ENCODE measurements at regions of chr20 and their contacts with region 1.

Region 1: DNA sequence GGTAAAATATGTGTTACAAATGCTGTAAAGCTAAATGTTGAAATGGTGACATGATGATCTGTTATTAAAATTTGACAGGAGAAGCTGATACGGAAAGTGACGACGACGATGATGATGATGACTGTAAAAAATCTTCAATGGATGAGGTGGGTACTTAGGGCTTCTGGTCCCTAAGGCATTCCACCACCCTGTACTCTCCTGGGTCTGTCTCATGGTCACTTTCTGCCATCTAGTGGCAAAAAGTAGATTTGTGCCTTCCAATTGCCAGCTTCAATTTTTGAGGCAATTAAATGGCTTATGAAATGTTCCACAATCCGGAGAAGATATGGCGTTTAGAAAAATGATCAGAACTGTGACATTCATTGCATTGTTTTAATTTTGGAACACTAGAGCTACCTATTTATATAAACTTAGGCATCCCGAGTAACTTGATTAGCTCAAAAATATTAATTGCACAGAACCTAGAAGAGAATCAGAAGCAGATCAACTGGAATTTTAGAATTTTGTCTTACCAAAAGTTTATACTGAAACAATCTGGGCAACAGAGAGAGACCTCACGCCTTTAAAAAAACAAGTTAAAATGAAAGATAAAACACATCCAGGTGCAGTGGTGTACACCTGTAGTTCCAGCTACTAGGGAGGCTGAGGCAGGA is 346.5 kb upstream of the PLCB4 start:
- DNase-seq: peak; percentile 56
- H3K4me3 ChIP-seq: no peak overlapping the region
- H3K27ac ChIP-seq: no peak overlapping the region
- H3K4me1 ChIP-seq: no peaks in the 10 kb centered on the region
- H3K27me3 ChIP-seq: no peaks in the 10 kb centered on the region
- CTCF ChIP-seq: peak; percentile 66 to 74 (median 67)
- POLR2A ChIP-seq: no peak

Region 2: DNA sequence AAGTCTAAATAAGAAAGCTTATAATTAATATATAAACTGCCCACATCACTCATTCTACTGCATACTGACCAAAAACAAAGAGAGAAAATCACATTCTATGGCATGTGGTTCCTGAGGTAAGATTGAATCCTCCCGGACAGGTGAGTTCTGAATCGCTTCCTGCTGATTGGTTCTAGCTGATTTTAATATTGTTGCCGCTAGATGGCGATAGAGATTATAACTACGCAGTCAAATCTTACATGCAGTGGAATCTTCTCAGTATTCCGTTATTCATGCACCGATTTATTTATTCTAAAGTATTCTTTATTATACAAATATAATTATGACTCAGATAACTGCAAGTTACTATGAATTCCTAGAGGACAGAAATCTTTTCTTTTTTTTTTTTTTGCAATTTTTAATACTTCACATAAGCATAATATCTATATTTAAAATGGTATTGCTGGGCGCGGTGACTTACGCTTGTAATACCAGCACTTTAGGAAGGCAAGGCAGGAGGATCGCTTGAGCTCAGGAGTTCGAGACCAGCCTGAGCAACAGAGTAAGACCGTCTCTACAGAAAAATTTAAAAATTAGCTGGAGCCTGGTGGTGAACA is 678.6 kb before region 1 on chr20:
- intact Hi-C with region 1: loop called (anchors 10 kb)
- DNase-seq: no peak
- H3K4me3 ChIP-seq: no peak overlapping the region
- H3K27ac ChIP-seq: no peak overlapping the region
- H3K4me1 ChIP-seq: no peaks in the 10 kb centered on the region
- H3K27me3 ChIP-seq: no peaks in the 10 kb centered on the region
- CTCF ChIP-seq: peak; percentile 42 to 87 (median 56)
- POLR2A ChIP-seq: no peak

Region 3: GRCh38 chr20:8131598-8132483 is 590.6 kb before region 1 on chr20 and contains the start of gene PLCB1:
- intact Hi-C with region 1: loop called (anchors 5 kb)
- DNase-seq: peak; percentile 88
- H3K4me3 ChIP-seq: peak within 1 kb of the TSS; percentile 68 to 72
- H3K27ac ChIP-seq: peak within 1 kb of the TSS; percentile 46 to 73
- H3K4me1 ChIP-seq: no peaks in the 10 kb centered on the region
- H3K27me3 ChIP-seq: no peaks in the 10 kb centered on the region
- CTCF ChIP-seq: peak; percentile 48 to 77 (median 76)
- POLR2A ChIP-seq: no peak
- total RNA-seq, gene PLCB1: 8.2 to 9.8 TPM

Measured in testis (tissue), 5 donors.